ENCODE measurements at regions of chr9 and their contacts with region 1.

Region 1: GRCh38 chr9:15104826-15105420 is 194.7 kb upstream of the FREM1 start:
- DNase-seq: peak; percentile 47
- ATAC-seq: peak; percentile 81
- H3K4me3 ChIP-seq: no peak overlapping the region
- H3K27ac ChIP-seq: no peak overlapping the region
- H3K4me1 ChIP-seq: peaks cover 13% of the 10 kb centered on the region
- H3K27me3 ChIP-seq: no peaks in the 10 kb centered on the region
- CTCF ChIP-seq: peak; percentile 81
- EP300 ChIP-seq: no peak
- POLR2A ChIP-seq: no peak
- RAD21 ChIP-seq: no peak; the same call in 1 of the 2 replicates

Region 2: GRCh38 chr9:15079989-15080388 is 24.9 kb before region 1 on chr9:
- CTCF ChIA-PET with region 1: no interaction called
- POLR2A ChIA-PET with region 1: interaction called, 6 read pairs
- in situ Hi-C with region 1: no loop called
- intact Hi-C with region 1: loop called (anchors 1 kb)
- DNase-seq: peak; percentile 95
- ATAC-seq: peak; percentile 91
- H3K4me3 ChIP-seq: no peak overlapping the region; a peak in 1 of 6 replicates
- H3K27ac ChIP-seq: peak overlapping the region; percentile 76
- H3K4me1 ChIP-seq: peaks cover 43% of the 10 kb centered on the region
- H3K27me3 ChIP-seq: no peaks in the 10 kb centered on the region
- CTCF ChIP-seq: no peak
- EP300 ChIP-seq: peak; percentile 91 to 95
- POLR2A ChIP-seq: no peak
- RAD21 ChIP-seq: no peak

Measured in HepG2 (cell line).